ENCODE measurements at regions of chr9 and their contacts with region 1.

Region 1: GRCh38 chr9:27179245-27179865 is 70.3 kb downstream of the TEK start:
- DNase-seq: no peak
- ATAC-seq: no peak
- H3K4me3 ChIP-seq: no peak overlapping the region
- H3K27ac ChIP-seq: no peak overlapping the region
- H3K4me1 ChIP-seq: peaks cover 2 to 17% of the 10 kb centered on the region in 2 experiments; a peak in 3 of 4 replicates
- H3K27me3 ChIP-seq: no peaks in the 10 kb centered on the region
- CTCF ChIP-seq: no peak
- POLR2A ChIP-seq: no peak
- RAD21 ChIP-seq: no peak

Region 2: GRCh38 chr9:27157086-27157485 is 22.3 kb before region 1 on chr9:
- CTCF ChIA-PET with region 1: no interaction called
- POLR2A ChIA-PET with region 1: no interaction called
- RAD21 ChIA-PET with region 1: no interaction called
- intact Hi-C with region 1: loop called (anchors 2 kb)
- DNase-seq: no peak
- ATAC-seq: no peak
- H3K4me3 ChIP-seq: no peak overlapping the region
- H3K27ac ChIP-seq: no peak overlapping the region
- H3K4me1 ChIP-seq: peaks cover 1 to 2% of the 10 kb centered on the region in 2 experiments
- H3K27me3 ChIP-seq: no peaks in the 10 kb centered on the region
- CTCF ChIP-seq: no peak
- POLR2A ChIP-seq: no peak
- RAD21 ChIP-seq: no peak

Region 3: GRCh38 chr9:27385606-27386322 is 206.4 kb after region 1 on chr9:
- CTCF ChIA-PET with region 1: no interaction called
- POLR2A ChIA-PET with region 1: no interaction called
- RAD21 ChIA-PET with region 1: no interaction called
- intact Hi-C with region 1: no loop called
- DNase-seq: no peak
- ATAC-seq: no peak
- H3K4me3 ChIP-seq: no peak overlapping the region
- H3K27ac ChIP-seq: no peak overlapping the region
- H3K4me1 ChIP-seq: no peaks in the 10 kb centered on the region
- H3K27me3 ChIP-seq: peaks cover 43% of the 10 kb centered on the region; the same call in 1 of the 2 replicates
- CTCF ChIP-seq: no peak
- POLR2A ChIP-seq: no peak
- RAD21 ChIP-seq: no peak